SK-N-SH (cell line): ENCODE measurements at regions of chr13 and their contacts with region 1.

Region 1: GRCh38 chr13:44917589-44918325 is 71.5 kb downstream of the NUFIP1 start:
- DNase-seq: peak; percentile 84
- H3K4me3 ChIP-seq: peak overlapping the region; percentile 58 to 64
- H3K27ac ChIP-seq: peak overlapping the region; percentile 98 to 99
- H3K4me1 ChIP-seq: peaks cover 8 to 20% of the 10 kb centered on the region in 2 experiments; a peak in 3 of 4 replicates
- H3K27me3 ChIP-seq: no peaks in the 10 kb centered on the region
- CTCF ChIP-seq: peak; percentile 55
- EP300 ChIP-seq: no peak; a peak in 1 of 4 replicates
- RAD21 ChIP-seq: peak; percentile 30

Region 2: DNA sequence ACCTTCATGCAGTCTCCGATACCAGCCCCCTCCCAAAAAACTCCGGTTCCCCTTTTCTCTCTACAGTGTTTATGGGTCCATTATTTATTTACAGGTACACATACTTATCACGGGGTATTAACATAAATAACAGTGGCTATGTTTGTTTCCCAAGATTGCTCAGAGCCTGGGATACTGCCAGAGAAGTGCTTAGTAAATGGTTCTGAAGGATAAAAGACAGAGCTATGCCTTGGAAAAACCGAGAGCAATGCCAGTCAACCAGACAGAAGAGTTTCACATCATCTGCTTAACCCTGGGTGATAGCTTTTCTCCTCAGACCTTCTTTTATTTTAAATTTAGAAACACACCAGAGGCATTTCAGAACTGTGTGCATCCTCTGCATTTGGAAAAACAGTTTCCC is 10.2 kb after region 1 on chr13:
- CTCF ChIA-PET with region 1: interaction called, 16 read pairs
- POLR2A ChIA-PET with region 1: no interaction called
- DNase-seq: no peak
- H3K4me3 ChIP-seq: no peak overlapping the region
- H3K27ac ChIP-seq: no peak overlapping the region
- H3K4me1 ChIP-seq: peaks cover 10 to 14% of the 10 kb centered on the region in 2 experiments; a peak in 3 of 4 replicates
- H3K27me3 ChIP-seq: no peaks in the 10 kb centered on the region
- CTCF ChIP-seq: no peak
- EP300 ChIP-seq: no peak
- RAD21 ChIP-seq: no peak